ENCODE measurements at regions of chr14 and their contacts with region 1.

Region 1: GRCh38 chr14:37932008-37932407 is 275.7 kb upstream of the SSTR1 start:
- DNase-seq: no peak
- H3K4me3 ChIP-seq: no peak overlapping the region
- CTCF ChIP-seq: no peak
- POLR2A ChIP-seq: no peak

Region 2: DNA sequence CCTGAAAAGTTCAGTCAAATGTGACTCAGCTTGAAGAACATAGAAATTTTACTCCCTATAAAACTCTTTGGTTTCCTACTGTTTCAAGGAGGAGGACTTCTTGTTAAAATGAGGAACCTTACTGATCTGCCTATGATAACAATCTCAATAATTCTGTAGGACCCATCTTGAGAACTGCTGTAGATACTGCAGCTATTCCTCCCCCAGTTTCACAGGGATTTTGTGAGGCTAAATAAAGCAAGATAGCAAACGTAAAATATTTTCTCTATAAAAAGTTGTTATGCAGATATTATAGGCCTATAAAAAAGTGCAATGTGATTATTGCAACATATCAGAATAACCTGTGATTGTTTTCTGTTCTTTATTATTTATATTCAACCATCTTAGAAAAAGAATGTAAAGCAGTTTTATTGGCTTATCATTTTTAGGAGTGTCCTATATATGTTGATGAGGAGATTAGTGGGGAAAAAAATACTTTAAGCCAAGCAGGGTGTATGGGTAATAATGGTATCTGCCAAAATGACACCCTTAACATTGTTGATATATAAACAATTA is 311.8 kb after region 1 on chr14:
- intact Hi-C with region 1: loop called (anchors 5 kb)
- DNase-seq: no peak
- H3K4me3 ChIP-seq: no peak overlapping the region
- CTCF ChIP-seq: no peak
- POLR2A ChIP-seq: no peak

Measured in lower leg skin (tissue), 4 donors.